ENCODE measurements at regions of chr12 and their contacts with region 1.

Region 1: DNA sequence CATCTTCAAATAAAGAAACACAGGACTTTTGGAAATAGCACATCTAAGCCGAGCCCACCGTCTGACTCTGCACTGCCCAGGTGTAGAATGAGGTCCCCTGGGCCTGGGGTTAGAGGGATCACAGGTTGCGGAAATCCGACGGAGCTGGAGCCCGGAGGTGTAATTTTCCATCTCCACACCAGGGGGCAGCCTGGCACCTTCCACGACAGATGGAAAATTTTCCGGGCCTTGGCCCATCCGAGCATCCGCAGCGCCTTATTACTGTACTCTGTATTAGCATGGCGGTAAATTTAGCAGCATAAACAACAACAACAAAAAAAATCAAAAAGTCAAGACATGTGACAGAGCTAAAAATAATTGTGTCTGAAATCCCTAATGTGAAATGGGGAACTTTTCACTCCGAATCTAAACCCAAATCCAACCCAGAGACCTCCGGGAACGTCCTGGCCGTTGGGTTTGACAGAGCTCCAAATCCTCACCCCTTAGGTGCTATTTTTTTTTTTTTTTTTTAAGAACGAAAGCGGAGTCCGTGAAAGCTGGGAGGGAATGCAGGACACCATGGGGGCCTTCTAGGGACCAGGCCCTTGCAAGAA is 93.9 kb downstream of the KSR2 start:
- DNase-seq: peak; percentile 81
- H3K4me3 Mint-ChIP-seq: no peak overlapping the region
- H3K27ac Mint-ChIP-seq: no peak overlapping the region
- H3K4me1 Mint-ChIP-seq: peaks cover 8% of the 10 kb centered on the region
- H3K27me3 Mint-ChIP-seq: peaks cover 19% of the 10 kb centered on the region

Region 2: GRCh38 chr12:117857632-117858612 is 17.0 kb before region 1 on chr12:
- CTCF ChIA-PET with region 1: interaction called, 16 read pairs
- intact Hi-C with region 1: no loop called
- DNase-seq: peak; percentile 76
- H3K4me3 Mint-ChIP-seq: no peak overlapping the region
- H3K27ac Mint-ChIP-seq: no peak overlapping the region
- H3K4me1 Mint-ChIP-seq: no peaks in the 10 kb centered on the region
- H3K27me3 Mint-ChIP-seq: peaks cover 2% of the 10 kb centered on the region

Region 3: DNA sequence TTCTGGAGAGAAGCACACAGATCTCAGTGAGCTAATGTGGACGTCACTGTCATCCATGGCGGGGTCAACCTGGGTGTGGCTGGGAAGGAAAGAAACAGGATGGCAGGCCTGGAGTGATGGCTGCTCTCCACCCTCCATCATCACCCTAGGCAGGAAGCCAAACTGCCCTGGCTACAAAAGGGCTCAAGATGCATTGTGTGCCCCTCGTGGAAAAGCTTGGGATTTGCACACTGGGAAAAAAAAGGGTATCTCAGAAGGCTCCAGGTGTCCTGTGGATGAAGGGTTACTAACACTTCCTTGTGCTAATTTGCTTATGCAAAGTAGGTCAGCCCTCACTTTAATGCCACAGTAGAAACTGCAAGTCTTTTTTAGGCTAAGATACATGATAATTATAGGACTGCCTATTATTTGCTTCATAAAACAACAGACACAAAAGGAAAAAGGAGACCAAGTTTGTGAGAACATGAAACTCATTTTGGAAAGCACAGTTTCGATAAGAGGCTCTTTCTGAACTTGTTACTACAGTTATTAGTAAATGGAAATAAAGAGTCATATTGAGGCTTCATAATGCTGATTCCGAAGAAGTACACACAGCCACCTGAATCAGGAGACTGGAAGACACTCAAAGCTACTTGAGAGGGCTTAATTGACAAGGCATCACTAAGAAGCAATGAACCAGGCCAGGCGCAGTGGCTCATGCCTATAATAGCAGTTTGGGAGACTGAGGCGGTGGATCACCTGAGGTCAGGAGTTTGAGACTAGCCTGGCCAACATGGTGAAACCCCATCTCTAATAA is 160.5 kb after region 1 on chr12:
- CTCF ChIA-PET with region 1: interaction called, 6 read pairs
- intact Hi-C with region 1: loop called (anchors 1 kb)
- DNase-seq: peak; percentile 55
- H3K4me3 Mint-ChIP-seq: no peak overlapping the region
- H3K27ac Mint-ChIP-seq: peak overlapping the region; percentile 87
- H3K4me1 Mint-ChIP-seq: peaks cover 57% of the 10 kb centered on the region
- H3K27me3 Mint-ChIP-seq: no peaks in the 10 kb centered on the region

Region 4: DNA sequence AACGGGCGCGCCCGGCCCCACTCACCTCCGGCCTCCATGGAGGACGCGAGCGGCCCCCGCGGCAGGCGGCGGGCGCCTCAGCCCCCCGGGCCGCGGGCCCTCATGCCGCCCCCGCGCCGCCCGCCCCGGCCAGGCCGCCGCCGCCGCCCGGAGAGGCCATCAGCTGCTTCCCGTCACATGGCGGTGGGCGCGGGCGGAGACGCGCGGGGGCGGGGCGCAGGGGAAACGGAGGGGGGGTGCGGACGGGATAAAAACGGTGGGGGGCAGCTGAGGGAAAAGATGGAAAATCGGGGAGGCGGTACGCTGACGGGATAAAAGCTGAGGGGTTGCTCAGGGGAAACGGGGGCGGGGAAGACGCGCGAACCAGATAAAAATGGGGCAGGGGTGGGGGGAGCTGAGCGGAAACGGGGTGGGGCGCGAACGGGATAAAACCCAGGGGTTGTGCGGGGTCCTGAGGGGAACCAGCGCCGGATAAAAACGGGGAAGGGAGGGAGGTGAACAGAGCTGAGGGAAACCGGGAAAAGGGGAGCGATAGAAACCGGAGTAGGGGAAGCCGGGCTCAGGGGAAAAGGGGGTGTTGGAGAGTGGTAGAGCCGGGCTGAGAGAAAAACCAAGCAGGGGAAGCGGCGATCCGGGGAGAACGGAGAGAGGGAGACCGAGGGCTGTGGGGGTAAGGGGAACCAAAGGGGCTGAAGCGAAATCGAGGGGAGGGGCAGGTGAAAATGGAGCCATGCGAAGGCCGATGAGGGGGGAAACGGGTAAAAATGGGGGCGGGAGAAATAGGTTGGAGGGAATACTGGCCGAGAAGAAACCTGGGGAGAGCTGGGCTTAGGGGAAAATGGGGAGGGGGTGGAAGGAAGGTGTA is 186.3 kb after region 1 on chr12 and contains the start of gene WSB2:
- CTCF ChIA-PET with region 1: interaction called, 28 read pairs
- intact Hi-C with region 1: no loop called
- DNase-seq: peak; percentile 51
- H3K4me3 Mint-ChIP-seq: peak within 1 kb of the TSS; percentile 90
- H3K27ac Mint-ChIP-seq: peak within 1 kb of the TSS; percentile 91
- H3K4me1 Mint-ChIP-seq: peaks cover 45% of the 10 kb centered on the region
- H3K27me3 Mint-ChIP-seq: peaks cover 5% of the 10 kb centered on the region
- total RNA-seq, gene WSB2: 31.0 to 31.7 TPM

Region 5: DNA sequence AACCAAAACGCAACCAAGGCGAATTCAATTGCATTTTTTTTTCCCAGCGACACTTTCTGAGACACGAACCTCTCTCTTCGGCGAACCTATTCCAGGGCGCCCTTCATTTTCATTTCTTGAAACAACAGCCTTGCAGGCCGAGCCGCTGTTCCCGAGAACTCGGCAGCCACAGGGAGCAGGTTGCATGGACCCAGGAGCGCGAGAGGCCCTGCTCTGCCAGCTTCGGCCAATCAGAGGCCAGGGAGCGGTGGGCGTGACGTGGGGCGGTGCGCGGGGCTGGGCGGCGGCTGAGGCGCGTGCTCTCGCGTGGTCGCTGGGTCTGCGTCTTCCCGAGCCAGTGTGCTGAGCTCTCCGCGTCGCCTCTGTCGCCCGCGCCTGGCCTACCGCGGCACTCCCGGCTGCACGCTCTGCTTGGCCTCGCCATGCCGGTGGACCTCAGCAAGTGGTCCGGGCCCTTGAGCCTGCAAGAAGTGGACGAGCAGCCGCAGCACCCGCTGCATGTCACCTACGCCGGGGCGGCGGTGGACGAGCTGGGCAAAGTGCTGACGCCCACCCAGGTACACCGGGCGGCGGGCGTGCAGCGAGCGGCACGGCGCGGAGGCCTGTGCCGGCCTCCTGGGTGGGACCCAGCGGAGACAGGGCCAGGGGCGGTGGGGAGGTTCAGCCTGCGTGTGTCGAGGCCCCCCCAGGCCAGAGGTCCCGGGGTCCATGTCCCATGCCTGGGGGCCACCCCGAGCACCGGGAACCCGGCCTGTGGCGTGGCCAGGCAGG is 261.0 kb after region 1 on chr12 and contains the start of gene PEBP1:
- CTCF ChIA-PET with region 1: interaction called, 4 read pairs
- intact Hi-C with region 1: loop called (anchors 10 kb)
- DNase-seq: peak; percentile 95
- H3K4me3 Mint-ChIP-seq: peak within 1 kb of the TSS; percentile 98
- H3K27ac Mint-ChIP-seq: peak within 1 kb of the TSS; percentile 83
- H3K4me1 Mint-ChIP-seq: peaks cover 31% of the 10 kb centered on the region
- H3K27me3 Mint-ChIP-seq: no peaks in the 10 kb centered on the region
- total RNA-seq, gene PEBP1: 117 to 120 TPM

Region 6: DNA sequence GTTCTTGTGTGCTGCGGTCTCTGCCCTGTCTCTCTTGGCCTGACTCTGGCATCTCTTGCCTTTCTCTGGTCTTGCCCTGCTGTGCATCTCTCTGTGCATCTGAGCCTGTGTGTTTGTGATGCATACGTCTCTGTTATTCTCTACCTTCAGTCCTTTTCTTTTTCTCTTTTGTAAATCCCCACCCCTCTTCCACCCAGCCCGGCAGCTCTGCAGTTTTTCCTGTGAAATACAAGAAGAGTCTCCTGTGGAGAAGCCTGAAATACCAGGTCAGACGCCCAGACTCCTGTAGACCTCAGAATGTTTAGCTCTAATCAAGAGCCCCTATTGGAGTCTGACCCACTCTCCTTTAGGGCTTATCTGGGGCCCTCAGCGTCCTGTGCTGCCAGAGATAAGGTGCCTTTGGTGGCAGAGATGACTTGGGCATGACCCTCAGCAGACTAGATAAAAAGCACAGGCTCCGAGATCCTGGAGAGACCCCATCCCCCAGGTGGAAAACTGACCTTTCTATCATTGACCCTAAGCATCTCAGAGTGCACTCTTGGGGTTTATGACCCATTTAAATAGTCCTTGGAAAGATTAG is 938.9 kb after region 1 on chr12:
- CTCF ChIA-PET with region 1: no interaction called
- intact Hi-C with region 1: no loop called
- DNase-seq: no peak
- H3K4me3 Mint-ChIP-seq: no peak overlapping the region
- H3K27ac Mint-ChIP-seq: no peak overlapping the region
- H3K4me1 Mint-ChIP-seq: no peaks in the 10 kb centered on the region
- H3K27me3 Mint-ChIP-seq: peaks cover 8% of the 10 kb centered on the region